ENCODE measurements at regions of chr3 and their contacts with region 1.

Region 1: GRCh38 chr3:177906126-177906511 is 630.1 kb upstream of the KCNMB2 start:
- DNase-seq: no peak
- H3K4me3 ChIP-seq: no peak overlapping the region
- H3K27ac ChIP-seq: peak overlapping the region; percentile 75 to 82 (median 77)
- H3K4me1 ChIP-seq: peaks cover 11 to 56% (median 40%) of the 10 kb centered on the region in 4 donors
- H3K27me3 ChIP-seq: no peaks in the 10 kb centered on the region
- CTCF ChIP-seq: peak in 1 of 3 experiments; percentile 45
- EP300 ChIP-seq: no peak
- POLR2A ChIP-seq: no peak

Region 2: DNA sequence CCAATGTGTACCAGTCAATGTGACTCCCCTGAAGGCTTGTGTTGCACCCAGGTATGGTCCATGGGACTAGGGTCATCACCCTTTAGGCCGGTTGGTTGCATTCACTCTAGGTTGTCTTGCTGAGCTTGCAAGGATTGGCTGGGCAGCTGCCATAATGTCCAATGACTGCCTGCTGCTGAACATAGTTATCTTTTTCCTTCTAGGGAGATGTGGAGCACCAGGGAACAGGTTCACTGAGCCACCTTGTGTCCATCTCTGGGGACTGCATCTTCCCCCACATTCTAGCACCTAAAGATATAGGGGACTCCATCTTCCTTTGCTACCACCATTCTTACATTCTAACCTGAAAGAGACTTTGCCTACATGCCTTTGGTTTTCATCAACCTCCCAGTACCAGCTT is 128.4 kb before region 1 on chr3:
- intact Hi-C with region 1: loop called (anchors 5 kb)
- DNase-seq: no peak
- H3K4me3 ChIP-seq: no peak overlapping the region
- H3K27ac ChIP-seq: no peak overlapping the region
- H3K4me1 ChIP-seq: peaks cover 37 to 58% (median 56%) of the 10 kb centered on the region in 4 donors
- H3K27me3 ChIP-seq: no peaks in the 10 kb centered on the region
- CTCF ChIP-seq: peak; percentile 25 to 49 (median 34)
- EP300 ChIP-seq: no peak
- POLR2A ChIP-seq: no peak

Region 3: DNA sequence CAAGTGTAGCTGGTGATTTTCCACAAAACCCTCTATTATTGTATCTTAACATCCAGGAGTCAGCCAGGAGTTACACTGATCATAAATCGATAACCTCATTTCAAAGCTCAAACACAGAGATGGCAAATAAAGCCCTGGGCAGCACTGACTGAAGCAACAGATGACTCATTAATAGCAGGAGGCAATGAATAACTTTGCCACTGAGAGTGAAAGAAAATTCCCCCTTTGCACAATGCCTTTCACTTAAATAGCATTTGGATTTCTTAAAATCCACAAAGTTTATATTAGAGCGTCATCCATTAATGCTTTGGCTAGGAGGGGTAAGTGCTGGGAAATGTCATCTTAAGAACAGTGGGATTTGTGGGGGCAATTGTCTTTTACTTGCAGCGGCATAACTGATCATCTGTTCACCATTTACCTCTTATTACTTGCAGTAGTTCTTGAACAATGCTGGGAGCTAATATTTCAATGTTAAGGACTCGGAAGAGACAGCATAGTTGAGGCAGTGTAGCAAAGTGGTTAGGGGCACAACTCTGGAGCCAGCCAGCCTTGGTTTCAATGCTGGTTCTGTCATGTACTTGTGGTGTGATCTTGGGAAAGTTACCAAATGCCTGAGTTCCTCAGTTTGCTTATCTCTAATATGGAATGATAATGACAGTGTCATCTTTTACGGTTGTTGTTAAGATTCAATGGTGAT is 78.5 kb before region 1 on chr3:
- intact Hi-C with region 1: loop called (anchors 5 kb)
- DNase-seq: no peak
- H3K4me3 ChIP-seq: no peak overlapping the region
- H3K27ac ChIP-seq: peak overlapping the region; percentile 72 to 85 (median 78)
- H3K4me1 ChIP-seq: peaks cover 36 to 96% (median 90%) of the 10 kb centered on the region in 4 donors
- H3K27me3 ChIP-seq: no peaks in the 10 kb centered on the region
- CTCF ChIP-seq: no peak
- EP300 ChIP-seq: no peak
- POLR2A ChIP-seq: no peak